ENCODE measurements at regions of chr9 and their contacts with region 1.

Region 1: DNA sequence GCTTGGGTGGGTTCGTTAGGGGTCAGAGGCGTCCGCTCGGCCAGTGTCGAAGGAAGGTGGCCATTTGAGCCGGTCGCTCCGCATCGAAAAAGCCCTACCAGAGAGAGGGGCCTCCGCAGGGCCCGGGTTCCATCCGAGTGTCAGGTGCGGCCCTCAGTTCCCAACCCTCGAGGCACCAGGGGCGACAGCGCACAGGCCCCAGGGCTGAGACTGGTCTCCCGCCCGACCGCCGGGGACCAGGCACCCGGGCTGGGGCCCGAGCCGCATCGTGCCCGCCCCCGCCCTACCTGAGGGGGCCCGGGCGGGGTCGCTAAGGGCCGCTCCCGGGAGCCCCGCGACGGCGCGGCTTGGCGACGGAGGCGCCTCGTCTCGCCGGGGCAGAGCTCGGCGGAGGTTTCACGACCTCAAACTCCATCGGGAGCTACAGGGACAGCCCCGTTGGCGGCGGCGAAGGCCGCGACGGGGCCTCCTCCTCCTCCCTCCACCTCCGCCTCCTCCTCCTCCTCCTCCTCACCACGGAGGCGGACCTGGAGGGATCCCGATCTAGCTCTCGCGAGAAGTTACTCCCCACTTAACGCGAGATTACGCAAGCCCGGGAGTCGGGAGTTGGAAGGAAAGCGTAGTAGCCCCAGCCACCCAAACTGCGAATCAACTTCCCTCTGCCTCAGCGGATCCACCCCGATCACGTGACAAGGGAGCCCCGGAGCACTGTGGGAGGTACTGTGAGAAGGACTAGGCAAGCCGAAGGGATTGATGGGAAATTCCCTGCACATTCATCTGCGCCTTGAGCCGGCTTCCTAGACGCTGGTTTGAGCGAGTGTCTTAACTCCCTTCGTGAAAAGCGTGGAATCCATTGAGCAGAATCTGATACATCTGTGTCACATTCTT is at the start of gene RC3H2:
- DNase-seq: peak; percentile 97
- H3K4me3 Mint-ChIP-seq: peak within 1 kb of the TSS; percentile 95
- H3K27ac Mint-ChIP-seq: peak within 1 kb of the TSS; percentile 96
- H3K4me1 Mint-ChIP-seq: peaks cover 49% of the 10 kb centered on the region
- H3K27me3 Mint-ChIP-seq: no peaks in the 10 kb centered on the region
- total RNA-seq, gene RC3H2: 39.8 and 49.3 TPM in 2 replicates

Region 2: DNA sequence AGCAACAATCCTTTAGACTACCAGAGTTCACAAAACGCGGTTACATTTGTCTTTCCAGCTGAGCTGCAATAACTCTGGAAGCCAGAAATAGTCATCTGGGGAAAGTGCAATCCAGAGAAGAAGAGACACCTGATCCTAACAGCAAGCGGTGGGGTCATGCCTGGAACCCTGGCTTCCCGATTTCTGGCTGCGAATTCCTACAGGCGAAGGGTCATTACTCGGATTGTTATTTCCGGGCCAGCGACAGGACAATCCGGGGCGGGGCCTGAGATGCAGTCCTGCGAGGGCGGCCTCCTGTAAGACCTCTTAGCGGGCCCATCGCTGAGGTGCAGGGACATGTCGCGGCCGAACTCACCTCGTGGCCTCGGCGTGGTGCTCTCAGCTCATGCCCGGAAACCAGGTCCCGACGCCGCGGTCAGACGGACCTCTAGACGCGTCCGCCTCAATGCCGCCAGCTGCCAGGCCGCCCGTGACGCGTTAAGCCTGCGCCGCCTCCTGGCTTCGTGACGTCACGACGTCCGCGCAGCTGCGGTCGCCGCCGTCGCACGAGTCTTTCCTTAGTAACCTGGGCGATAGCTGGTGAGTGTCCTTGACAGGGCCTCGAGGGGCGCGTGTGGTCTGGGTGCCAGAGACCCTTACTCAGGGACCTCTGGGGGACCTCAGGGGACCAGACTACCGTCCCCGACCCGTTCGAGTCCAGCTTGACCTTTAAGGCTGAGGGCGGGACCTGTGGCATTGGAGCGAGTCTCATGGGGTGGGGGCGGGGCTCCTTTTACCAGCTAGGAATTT is 640.5 kb before region 1 on chr9 and contains the starts of genes MRRF and RBM18:
- intact Hi-C with region 1: loop called (anchors 10 kb)
- DNase-seq: peak; percentile 89
- H3K4me3 Mint-ChIP-seq: peak within 1 kb of the TSS; percentile 97
- H3K27ac Mint-ChIP-seq: peak within 1 kb of the TSS; percentile 100
- H3K4me1 Mint-ChIP-seq: peaks cover 38% of the 10 kb centered on the region
- H3K27me3 Mint-ChIP-seq: no peaks in the 10 kb centered on the region
- total RNA-seq, gene MRRF: 58.8 and 66.0 TPM in 2 replicates
- total RNA-seq, gene RBM18: 29.9 and 31.5 TPM in 2 replicates

Region 3: DNA sequence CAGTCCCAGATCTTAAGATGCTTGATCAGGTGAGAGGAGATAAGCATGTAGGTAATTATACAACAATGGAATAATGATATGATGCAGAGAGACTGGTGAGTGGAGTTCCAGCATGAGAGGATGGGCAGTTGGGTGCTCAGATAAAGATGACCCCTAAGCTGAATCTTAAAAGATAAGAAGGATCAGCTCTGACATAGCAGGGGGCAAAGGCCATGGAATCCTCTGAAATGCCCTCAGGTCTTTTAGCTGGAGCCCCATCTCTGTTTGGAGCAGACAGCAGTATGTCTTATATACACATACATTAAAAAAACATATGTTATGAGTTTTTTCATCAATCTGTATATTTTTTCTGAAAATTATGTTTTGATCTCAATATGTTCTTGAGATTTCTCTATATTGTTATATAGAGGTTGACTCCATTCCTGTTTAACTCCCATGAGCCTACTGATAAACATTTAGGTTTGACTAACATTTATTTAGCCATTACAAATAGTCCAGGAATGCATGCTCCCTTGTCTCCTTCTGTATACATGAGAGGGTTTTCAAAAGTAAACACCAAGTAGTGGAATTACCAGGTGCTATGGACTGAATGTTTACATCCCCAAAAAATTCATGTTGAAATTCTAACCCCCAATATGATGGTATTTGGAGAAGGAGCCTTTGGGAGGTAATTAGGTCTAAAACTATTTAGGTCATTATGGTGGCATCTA is 120.0 kb before region 1 on chr9:
- intact Hi-C with region 1: no loop called
- DNase-seq: no peak
- H3K4me3 Mint-ChIP-seq: no peak overlapping the region
- H3K27ac Mint-ChIP-seq: no peak overlapping the region
- H3K4me1 Mint-ChIP-seq: no peaks in the 10 kb centered on the region
- H3K27me3 Mint-ChIP-seq: no peaks in the 10 kb centered on the region

Region 4: DNA sequence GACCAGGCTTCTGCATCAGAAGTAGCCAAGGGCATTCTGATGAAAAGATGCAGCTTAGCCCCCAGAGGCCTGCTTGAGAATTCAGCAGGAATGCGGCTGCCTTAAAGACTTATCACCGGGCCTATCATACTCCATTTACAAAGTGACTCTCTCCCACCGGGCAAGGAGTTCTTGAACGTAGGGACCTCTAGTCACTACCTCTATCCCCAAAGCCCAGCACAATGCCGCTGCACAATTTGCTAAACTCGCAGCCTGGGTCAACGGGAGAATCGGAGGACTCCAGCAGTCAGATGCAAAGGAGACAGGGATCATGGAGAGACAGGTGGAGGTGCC is 77.3 kb before region 1 on chr9:
- intact Hi-C with region 1: loop called (anchors 1 kb)
- DNase-seq: no peak
- H3K4me3 Mint-ChIP-seq: peak overlapping the region; percentile 96
- H3K27ac Mint-ChIP-seq: peak overlapping the region; percentile 84
- H3K4me1 Mint-ChIP-seq: peaks cover 36% of the 10 kb centered on the region
- H3K27me3 Mint-ChIP-seq: no peaks in the 10 kb centered on the region

Region 5: GRCh38 chr9:122865300-122865699 is 39.8 kb before region 1 on chr9:
- intact Hi-C with region 1: no loop called
- DNase-seq: no peak
- H3K4me3 Mint-ChIP-seq: no peak overlapping the region
- H3K27ac Mint-ChIP-seq: no peak overlapping the region
- H3K4me1 Mint-ChIP-seq: no peaks in the 10 kb centered on the region
- H3K27me3 Mint-ChIP-seq: no peaks in the 10 kb centered on the region

Region 6: GRCh38 chr9:122931226-122932121 is 26.4 kb after region 1 on chr9 and contains the start of gene ZBTB26:
- intact Hi-C with region 1: loop called (anchors 1 kb)
- DNase-seq: peak; percentile 83
- H3K4me3 Mint-ChIP-seq: no peak within 1 kb of the TSS
- H3K27ac Mint-ChIP-seq: peak within 1 kb of the TSS; percentile 83
- H3K4me1 Mint-ChIP-seq: peaks cover 8% of the 10 kb centered on the region
- H3K27me3 Mint-ChIP-seq: no peaks in the 10 kb centered on the region
- total RNA-seq, gene ZBTB26: 8.3 and 9.9 TPM in 2 replicates

Region 7: DNA sequence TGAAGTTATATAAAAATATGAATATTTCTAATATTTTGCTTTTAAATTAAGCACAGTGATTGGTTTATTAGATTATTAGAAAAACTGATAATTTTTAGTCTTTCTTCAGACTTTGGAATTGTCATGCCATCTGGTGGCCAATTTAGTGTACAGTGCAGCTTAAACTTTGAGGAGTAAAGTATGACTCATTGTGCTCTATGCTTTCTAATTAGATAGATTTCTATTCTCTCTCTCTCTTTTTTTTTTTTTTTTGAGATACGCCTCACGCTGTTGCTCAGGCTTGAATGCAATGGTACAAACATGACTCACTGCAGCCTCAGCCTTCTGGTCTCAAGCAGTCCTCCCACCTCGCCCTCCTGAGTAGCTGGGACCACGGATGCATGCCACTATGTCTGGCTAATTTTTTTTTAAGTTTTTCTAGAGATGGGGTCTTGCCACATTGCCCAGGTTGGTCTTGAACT is 86.3 kb after region 1 on chr9:
- intact Hi-C with region 1: loop called (anchors 2 kb)
- DNase-seq: no peak
- H3K4me3 Mint-ChIP-seq: no peak overlapping the region
- H3K27ac Mint-ChIP-seq: no peak overlapping the region
- H3K4me1 Mint-ChIP-seq: peaks cover 5% of the 10 kb centered on the region
- H3K27me3 Mint-ChIP-seq: no peaks in the 10 kb centered on the region

Region 8: GRCh38 chr9:123338710-123339665 is 433.9 kb after region 1 on chr9:
- intact Hi-C with region 1: loop called (anchors 1 kb)
- DNase-seq: peak; percentile 62
- H3K4me3 Mint-ChIP-seq: peak overlapping the region; percentile 83
- H3K27ac Mint-ChIP-seq: peak overlapping the region; percentile 93
- H3K4me1 Mint-ChIP-seq: peaks cover 40% of the 10 kb centered on the region
- H3K27me3 Mint-ChIP-seq: no peaks in the 10 kb centered on the region

Measured in activated T-helper 1 cell treated with anti-CD3 and anti-CD28 coated beads, Interleukin-12 subunit alpha, Interleukin-12 subunit beta, Interleukin-2, Interleukin-4 antibody, amounts not matched to agents 30 ng/mL and 10 ng/mL and 1 ng/mL, durations not matched to agents 14 hours and 24 hours and 36 hours (primary cell).